ENCODE measurements at regions of chr3 and their contacts with region 1.

Region 1: DNA sequence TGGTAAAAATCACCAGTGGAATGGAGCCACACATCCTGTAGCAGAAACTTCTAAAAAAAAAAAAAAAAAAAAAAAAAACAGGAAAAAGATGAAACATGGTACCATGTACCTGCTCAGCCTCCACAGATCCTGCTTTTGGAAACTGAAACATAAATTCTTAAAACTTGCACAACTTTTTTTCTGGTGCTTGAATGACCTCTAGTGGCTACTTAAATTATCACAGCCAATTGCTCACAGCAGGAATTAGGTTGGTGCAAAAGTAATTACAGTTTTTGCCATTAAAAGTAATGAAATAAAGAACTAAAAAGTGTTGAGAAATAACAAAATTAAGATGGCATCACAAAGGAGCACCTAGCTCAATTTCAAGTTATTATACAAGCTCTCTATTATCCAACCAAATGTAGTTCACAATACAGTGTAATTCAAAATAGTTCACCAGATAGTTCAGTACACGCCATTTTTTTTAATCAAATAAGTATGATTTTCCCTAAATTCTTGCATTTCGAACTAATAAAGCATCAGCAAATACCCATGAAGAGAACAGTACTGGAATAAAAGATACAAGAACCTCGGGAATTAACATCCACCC is 80.6 kb downstream of the ULK4 start:
- DNase-seq: peak in 1 of 3 donors; percentile 62
- ATAC-seq: no peak
- H3K4me3 ChIP-seq: no peak overlapping the region
- H3K4me1 ChIP-seq: no peaks in the 10 kb centered on the region
- CTCF ChIP-seq: peak; percentile 45

Region 2: DNA sequence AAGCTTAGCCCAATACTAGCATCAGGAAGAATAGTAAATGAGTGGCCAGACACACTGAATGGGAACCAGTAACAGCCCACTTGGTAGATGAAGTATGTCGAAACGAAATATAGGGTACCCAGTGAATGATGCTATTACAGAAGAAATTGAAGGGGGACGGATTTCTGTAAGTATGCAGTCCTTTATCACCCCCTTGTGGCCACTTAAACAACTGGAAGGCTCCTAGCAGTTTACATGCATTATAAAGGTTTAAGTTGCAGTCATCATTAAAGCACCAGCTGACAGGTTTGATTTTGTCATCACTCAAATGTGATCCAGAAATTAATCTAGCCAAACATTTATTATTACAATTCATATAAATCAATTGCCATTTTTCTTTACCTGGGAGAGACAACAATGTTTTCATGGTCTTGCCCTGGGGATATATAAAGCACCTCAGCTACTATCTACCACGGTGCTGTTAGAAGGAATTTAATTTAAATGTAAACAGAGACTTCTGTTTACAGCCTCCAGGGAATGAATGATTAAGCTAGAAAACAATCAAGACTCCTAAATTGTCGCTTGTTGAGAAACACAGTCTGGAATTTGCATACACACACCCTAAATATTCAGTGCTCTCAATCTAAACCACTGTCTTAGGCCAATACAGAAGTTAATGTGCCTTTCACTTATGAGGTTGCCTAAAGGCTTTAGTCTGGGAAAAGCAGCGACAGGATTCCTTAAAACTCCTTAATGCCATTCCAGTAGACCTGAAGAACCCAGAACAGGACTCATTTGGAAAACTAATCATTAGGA is 1564.1 kb before region 1 on chr3:
- intact Hi-C with region 1: loop called in 1 of 2 experiments (anchors 10 kb)
- DNase-seq: peak in 1 of 3 donors; percentile 75
- ATAC-seq: peak; percentile 63
- H3K4me3 ChIP-seq: no peak overlapping the region
- H3K4me1 ChIP-seq: peaks cover 7% of the 10 kb centered on the region
- CTCF ChIP-seq: peak; percentile 50

Region 3: GRCh38 chr3:40584625-40585189 is 1296.6 kb before region 1 on chr3:
- intact Hi-C with region 1: loop called (anchors 2 to 5 kb)
- DNase-seq: peak; percentile 82 to 93 (median 90)
- ATAC-seq: peak; percentile 94
- H3K4me3 ChIP-seq: no peak overlapping the region
- H3K4me1 ChIP-seq: no peaks in the 10 kb centered on the region
- CTCF ChIP-seq: peak; percentile 88

Region 4: GRCh38 chr3:42853739-42854302 is 972.5 kb after region 1 on chr3:
- intact Hi-C with region 1: no loop called
- DNase-seq: no peak
- ATAC-seq: no peak
- H3K4me3 ChIP-seq: no peak overlapping the region
- H3K4me1 ChIP-seq: no peaks in the 10 kb centered on the region
- CTCF ChIP-seq: no peak

Measured in mucosa of descending colon (tissue), 3 donors.